Activated CD4-positive, alpha-beta T cell treated with anti-CD3 and anti-CD28 coated beads, Interleukin-2, amount 10 ng/mL, durations not matched to agents 7 days and 5 days (primary cell): ENCODE measurements at regions of chr3 and their contacts with region 1.

Region 1: DNA sequence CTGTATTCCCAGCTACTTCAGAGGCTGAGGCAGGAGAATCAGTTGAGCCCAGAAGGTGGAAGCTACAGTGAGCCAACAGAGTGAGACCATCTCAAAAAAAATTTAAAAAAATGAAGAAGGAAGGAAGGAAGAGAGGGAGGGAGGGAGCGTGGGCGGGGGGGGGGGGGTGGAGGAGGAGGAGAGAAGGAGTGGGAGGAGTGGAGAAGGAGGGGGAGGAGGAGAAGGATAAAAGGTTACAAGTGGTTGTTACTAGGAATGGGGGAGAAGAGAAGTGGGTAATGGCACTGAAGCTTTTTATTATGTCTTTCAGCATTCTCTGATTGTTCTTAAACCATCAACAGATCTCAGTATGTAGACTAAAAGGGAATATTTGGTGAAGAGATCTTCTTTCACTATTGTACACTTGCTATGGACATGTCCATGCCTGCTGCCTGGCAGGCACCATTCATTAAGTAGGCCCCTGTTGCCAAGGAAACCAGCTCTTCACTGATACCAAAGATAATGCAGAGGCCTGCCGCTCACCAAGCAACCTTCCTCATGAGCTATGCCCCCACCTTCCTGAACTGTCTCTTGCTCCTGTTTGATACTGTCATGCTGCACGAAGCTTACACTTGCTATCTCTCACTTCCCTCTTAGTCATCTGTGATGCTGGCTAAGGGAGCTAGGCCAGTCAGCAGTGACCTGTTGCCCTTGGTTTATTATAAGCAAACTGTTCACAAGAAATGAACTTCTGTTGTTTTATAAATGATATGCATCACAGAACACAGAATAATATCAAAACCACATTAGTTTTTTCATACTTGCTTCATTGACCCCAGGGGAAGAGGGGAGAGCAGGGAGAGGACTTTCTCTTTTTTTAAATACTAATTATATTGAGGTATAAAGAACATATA is 23.1 kb downstream of the EPM2AIP1 start:
- DNase-seq: peak; percentile 43
- H3K4me3 Mint-ChIP-seq: no peak overlapping the region
- H3K27ac Mint-ChIP-seq: peak overlapping the region; percentile 64
- H3K4me1 Mint-ChIP-seq: peaks cover 38% of the 10 kb centered on the region
- H3K27me3 Mint-ChIP-seq: no peaks in the 10 kb centered on the region

Region 2: DNA sequence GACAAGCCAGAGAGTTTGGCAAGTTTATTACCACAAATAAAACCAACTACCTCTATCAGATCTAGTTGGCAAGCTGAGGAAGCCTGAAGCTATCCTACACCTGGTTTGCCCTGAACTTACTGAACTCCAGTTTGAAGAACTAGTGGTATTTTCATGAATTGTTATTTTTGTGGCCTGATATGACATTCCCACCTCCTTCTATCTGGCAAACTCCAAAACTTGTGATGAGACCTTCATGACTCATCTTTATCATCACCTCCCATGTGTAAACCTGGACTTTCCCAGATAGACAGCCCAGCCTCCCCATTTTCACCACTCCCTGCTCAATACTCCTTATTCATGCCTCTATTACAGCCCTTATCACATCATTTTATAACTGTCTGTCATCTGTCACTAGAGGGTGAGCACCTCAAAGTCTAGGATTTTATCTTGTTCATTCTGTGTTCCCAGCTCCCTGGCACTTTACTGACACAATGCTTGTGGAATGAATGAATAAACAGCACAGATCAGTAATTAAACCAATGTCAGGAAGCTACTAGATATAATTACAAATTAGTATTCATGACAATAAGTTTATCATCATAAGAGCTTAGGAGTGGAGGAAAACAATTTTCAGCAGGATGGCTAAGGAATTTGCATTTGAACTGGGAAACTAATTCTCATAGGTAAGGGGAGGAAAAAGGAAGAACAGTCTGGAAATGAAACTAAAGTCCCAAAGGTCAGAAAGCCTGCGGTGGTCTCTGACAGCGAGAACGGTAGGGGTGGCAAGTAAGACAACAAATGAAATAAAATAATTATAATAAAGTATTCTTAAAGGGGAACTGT is 11.7 kb before region 1 on chr3:
- CTCF ChIA-PET with region 1: interaction called, 10 read pairs
- POLR2A ChIA-PET with region 1: no interaction called
- DNase-seq: no peak
- H3K4me3 Mint-ChIP-seq: no peak overlapping the region
- H3K27ac Mint-ChIP-seq: no peak overlapping the region
- H3K4me1 Mint-ChIP-seq: peaks cover 15% of the 10 kb centered on the region
- H3K27me3 Mint-ChIP-seq: no peaks in the 10 kb centered on the region